Sigmoid colon (tissue), 7 donors: ENCODE measurements at regions of chr2 and their contacts with region 1.

Region 1: GRCh38 chr2:112542123-112542983 is at the start of gene POLR1B:
- DNase-seq: peak; percentile 88
- H3K4me3 ChIP-seq: peak within 1 kb of the TSS; percentile 61 to 96 (median 87)
- H3K27ac ChIP-seq: peak within 1 kb of the TSS; percentile 88 to 93 (median 90)
- H3K4me1 ChIP-seq: peaks cover 0 to 21% (median 16%) of the 10 kb centered on the region in 4 donors
- H3K27me3 ChIP-seq: no peaks in the 10 kb centered on the region
- CTCF ChIP-seq: no peak
- EP300 ChIP-seq: no peak
- POLR2A ChIP-seq: no peak
- total RNA-seq, gene POLR1B: 7.2 to 8.9 (median 8.2) TPM

Region 2: GRCh38 chr2:112481050-112481527 is 61.3 kb before region 1 on chr2:
- intact Hi-C with region 1: loop called (anchors 1 kb)
- DNase-seq: peak; percentile 88
- H3K4me3 ChIP-seq: peak overlapping the region; percentile 60 to 77 (median 72)
- H3K27ac ChIP-seq: peak overlapping the region; percentile 84 to 94 (median 88)
- H3K4me1 ChIP-seq: peaks cover 0 to 30% (median 22%) of the 10 kb centered on the region in 4 donors
- H3K27me3 ChIP-seq: no peaks in the 10 kb centered on the region
- CTCF ChIP-seq: peak; percentile 53 to 87 (median 65)
- EP300 ChIP-seq: no peak
- POLR2A ChIP-seq: no peak

Region 3: GRCh38 chr2:112584134-112584890 is 42.0 kb after region 1 on chr2 and contains the start of gene CHCHD5:
- intact Hi-C with region 1: loop called (anchors 1 kb)
- DNase-seq: peak; percentile 98
- H3K4me3 ChIP-seq: peak within 1 kb of the TSS; percentile 62 to 69 (median 66)
- H3K27ac ChIP-seq: peak within 1 kb of the TSS; percentile 85 to 94 (median 93)
- H3K4me1 ChIP-seq: peaks cover 0 to 25% (median 18%) of the 10 kb centered on the region in 4 donors
- H3K27me3 ChIP-seq: no peaks in the 10 kb centered on the region
- CTCF ChIP-seq: peak in 2 of 4 experiments; percentile 17 to 27
- EP300 ChIP-seq: peak in 2 of 4 donors; percentile 15 to 16
- POLR2A ChIP-seq: peak; percentile 18 to 36
- total RNA-seq, gene CHCHD5: 13.8 to 36.4 (median 25.3) TPM

Region 4: DNA sequence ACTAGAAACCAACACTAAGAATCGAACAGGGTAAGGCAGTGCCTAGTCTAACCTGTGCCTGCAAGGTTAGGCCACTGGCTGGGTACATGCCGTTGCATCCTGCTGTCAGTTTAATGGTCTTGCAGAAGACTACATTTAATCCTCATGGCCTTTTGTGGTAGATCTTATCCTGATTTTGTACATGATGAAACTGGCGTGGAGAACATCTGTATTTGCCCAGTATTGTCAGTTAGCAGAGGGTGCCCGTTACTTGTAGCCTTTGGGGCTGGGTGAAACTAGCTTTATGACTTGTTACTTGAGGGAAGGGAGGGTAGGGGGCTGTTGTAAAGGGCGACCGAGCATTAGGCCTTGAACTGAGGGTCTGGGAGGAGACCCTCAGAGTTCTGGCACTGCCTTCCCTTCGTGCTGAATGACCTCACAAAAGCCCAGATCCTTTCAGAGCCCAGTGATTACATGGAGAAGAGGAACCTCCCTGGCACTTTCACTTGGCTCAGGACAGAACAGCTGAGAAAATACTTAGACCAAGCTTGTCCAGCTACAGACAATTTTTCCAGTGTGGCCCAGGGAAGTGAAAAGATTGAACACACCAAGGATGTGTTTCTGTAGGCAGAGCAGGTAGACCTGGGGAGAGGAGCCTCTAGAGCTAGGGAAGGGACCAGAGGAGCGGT is 122.9 kb after region 1 on chr2:
- intact Hi-C with region 1: no loop called
- DNase-seq: no peak
- H3K4me3 ChIP-seq: no peak overlapping the region
- H3K27ac ChIP-seq: no peak overlapping the region
- H3K4me1 ChIP-seq: no peaks in the 10 kb centered on the region
- H3K27me3 ChIP-seq: no peaks in the 10 kb centered on the region
- CTCF ChIP-seq: no peak
- EP300 ChIP-seq: no peak
- POLR2A ChIP-seq: no peak